Panc1 (cell line): ENCODE measurements at regions of chr4 and their contacts with region 1.

Region 1: GRCh38 chr4:113971706-113972360 is 7.6 kb downstream of the ARSJ start:
- DNase-seq: no peak
- ATAC-seq: peak; percentile 79
- H3K4me3 ChIP-seq: no peak overlapping the region; a peak in 1 of 4 replicates
- H3K27ac ChIP-seq: peak overlapping the region; percentile 66
- H3K4me1 ChIP-seq: peaks cover 12% of the 10 kb centered on the region; the same call in 1 of the 2 replicates
- H3K27me3 ChIP-seq: no peaks in the 10 kb centered on the region
- CTCF ChIP-seq: no peak

Region 2: DNA sequence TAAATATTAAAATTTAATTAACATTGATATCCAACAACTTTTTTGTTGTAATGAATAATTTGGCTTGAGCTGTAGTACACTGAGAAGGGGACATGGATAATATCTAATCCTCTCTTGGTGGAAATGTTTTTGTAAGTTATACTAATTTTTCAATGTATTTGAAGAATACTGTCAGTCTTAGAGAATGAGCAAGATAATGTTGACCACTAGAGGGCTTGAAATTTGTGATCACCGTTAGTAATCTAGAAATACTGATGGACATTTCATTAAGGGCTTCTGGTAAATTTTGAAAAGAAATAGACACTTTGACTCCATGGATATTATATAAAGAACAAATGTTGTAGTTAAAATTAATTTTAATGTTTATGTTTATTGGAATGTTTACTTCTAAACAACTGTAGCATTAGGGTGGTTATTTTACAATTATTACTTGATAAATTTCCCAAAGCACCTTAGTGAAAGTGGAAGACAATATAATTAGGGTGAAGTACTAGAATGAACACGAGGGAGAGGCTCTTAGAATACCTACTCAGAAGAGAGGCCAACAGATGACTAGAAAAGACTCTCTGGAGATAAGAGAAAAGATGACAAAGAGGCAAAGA is 190.3 kb before region 1 on chr4:
- CTCF ChIA-PET with region 1: interaction called, 10 read pairs
- POLR2A ChIA-PET with region 1: no interaction called
- in situ Hi-C with region 1: no loop called
- intact Hi-C with region 1: no loop called
- DNase-seq: no peak
- ATAC-seq: no peak
- H3K4me3 ChIP-seq: no peak overlapping the region
- H3K27ac ChIP-seq: no peak overlapping the region
- H3K4me1 ChIP-seq: no peaks in the 10 kb centered on the region
- H3K27me3 ChIP-seq: no peaks in the 10 kb centered on the region
- CTCF ChIP-seq: peak; percentile 63; the same call in 1 of the 2 replicates

Region 3: DNA sequence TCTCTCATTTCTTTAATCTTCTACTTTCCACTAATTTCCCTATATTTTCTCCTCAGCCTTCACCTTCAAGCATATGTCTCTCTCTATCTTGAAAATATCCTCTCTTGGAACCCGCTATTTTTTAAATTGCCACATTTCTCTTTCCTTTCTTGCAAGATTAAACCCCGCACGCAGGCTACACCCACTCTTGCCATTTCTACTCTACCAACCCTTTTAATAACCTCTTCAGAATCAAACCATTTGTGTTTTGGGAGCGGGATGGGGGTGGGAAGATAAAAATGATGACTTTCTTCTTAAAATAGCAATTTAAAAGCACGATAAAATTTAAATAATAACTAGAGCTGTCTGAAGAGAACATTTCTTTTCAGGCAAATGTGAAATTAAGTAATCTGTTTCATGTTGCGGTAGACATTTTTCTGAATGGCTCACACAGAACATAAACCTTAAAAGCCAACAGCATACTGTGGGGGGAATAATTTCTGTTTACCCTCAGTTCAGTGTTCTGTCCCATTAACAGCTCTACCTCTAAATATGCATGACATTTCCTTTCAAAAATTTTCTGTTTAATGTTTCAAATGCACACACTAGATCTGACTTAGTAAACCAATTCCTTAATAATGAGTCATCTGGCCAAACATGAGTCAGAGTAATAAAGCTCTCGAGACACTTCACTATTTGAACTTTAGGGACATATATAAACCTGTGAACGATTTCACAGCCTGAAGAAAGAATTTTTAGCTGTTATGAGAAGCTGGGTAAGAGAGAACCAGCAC is 12.9 kb before region 1 on chr4:
- CTCF ChIA-PET with region 1: no interaction called
- POLR2A ChIA-PET with region 1: no interaction called
- in situ Hi-C with region 1: no loop called
- intact Hi-C with region 1: loop called (anchors 2 kb)
- DNase-seq: peak; percentile 97
- ATAC-seq: peak; percentile 89
- H3K4me3 ChIP-seq: peak overlapping the region; percentile 22 to 38
- H3K27ac ChIP-seq: peak overlapping the region; percentile 99
- H3K4me1 ChIP-seq: peaks cover 78% of the 10 kb centered on the region
- H3K27me3 ChIP-seq: no peaks in the 10 kb centered on the region
- CTCF ChIP-seq: no peak

Region 4: DNA sequence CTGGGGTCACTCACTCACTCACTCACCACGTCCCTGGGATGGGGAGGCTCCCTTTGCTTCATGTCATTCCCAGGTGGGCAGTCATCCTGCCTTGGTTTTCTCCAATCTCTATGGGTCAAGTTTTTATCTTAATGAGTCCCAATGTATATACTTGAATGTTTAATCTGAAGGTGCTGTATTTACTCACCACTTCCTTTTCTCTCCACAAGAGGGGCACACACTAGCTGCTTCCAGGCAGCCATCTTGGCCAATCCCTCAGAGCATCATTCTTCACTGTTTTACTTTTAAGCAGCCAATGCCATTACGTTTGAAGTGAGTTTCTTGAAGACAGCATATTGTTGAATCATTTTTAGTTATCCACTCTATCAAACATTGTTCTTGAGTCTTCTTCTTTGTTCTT is 161.0 kb after region 1 on chr4:
- CTCF ChIA-PET with region 1: no interaction called
- POLR2A ChIA-PET with region 1: no interaction called
- in situ Hi-C with region 1: no loop called
- intact Hi-C with region 1: no loop called
- DNase-seq: no peak
- ATAC-seq: no peak
- H3K4me3 ChIP-seq: no peak overlapping the region
- H3K27ac ChIP-seq: no peak overlapping the region
- H3K4me1 ChIP-seq: no peaks in the 10 kb centered on the region
- H3K27me3 ChIP-seq: no peaks in the 10 kb centered on the region
- CTCF ChIP-seq: no peak; the same call in 1 of the 2 replicates